GM10248 (cell line): ENCODE measurements at regions of chr1 and their contacts with region 1.

Region 1: GRCh38 chr1:224124220-224124619 is 10.3 kb downstream of the FBXO28 start:
- DNase-seq: no peak
- CTCF ChIP-seq: no peak

Region 2: GRCh38 chr1:224113918-224114786 is 10.1 kb before region 1 on chr1 and contains the start of gene FBXO28:
- CTCF ChIA-PET with region 1: interaction called, 11 read pairs
- POLR2A ChIA-PET with region 1: no interaction called
- DNase-seq: peak; percentile 95
- CTCF ChIP-seq: no peak